ENCODE measurements at regions of chr17 and their contacts with region 1.

Region 1: GRCh38 chr17:63848834-63849700 is 6.6 kb upstream of the SMARCD2 start:
- DNase-seq: no peak
- H3K4me3 ChIP-seq: peak overlapping the region; percentile 43
- CTCF ChIP-seq: peak; percentile 78

Region 2: DNA sequence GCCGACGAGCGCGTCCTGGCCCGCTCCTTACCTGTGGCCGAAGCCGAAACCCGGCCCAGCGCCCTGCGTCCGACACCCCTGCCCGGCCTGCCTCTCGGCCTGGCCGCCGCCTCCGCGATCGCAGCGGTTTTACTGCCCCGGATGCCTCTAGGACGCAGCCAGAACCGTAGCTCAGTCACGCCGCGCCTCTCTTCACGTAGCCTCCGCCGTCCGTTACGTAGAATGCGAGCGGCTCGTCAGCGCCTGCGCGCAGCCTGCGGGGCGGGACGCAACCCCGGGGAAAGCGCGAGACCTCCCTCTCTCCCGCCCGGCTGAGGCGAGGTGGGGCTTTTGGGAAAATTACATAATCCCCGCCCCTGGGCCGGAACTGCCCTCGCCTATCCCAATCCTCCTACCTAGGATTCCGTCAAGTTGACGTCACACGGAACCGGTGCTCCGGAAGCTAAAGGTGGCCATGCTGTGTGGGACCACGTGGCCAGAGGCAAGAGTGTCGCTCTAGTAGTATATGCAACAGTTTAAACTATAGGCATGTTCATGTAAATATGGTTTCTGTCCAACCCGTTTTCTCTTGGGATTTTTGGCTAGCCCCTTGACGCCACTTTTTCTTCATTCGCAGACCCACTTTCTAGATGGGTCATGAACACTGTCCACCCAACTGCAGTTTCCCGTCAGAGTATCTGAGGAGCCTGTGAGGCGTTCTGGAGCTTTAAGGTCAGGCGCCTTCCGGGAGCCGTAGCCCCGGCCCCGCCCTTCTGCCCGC is 75.5 kb before region 1 on chr17 and contains the start of gene CCDC47:
- CTCF ChIA-PET with region 1: no interaction called
- POLR2A ChIA-PET with region 1: no interaction called
- DNase-seq: peak; percentile 93
- H3K4me3 ChIP-seq: peak within 1 kb of the TSS; percentile 92
- CTCF ChIP-seq: no peak

Region 3: DNA sequence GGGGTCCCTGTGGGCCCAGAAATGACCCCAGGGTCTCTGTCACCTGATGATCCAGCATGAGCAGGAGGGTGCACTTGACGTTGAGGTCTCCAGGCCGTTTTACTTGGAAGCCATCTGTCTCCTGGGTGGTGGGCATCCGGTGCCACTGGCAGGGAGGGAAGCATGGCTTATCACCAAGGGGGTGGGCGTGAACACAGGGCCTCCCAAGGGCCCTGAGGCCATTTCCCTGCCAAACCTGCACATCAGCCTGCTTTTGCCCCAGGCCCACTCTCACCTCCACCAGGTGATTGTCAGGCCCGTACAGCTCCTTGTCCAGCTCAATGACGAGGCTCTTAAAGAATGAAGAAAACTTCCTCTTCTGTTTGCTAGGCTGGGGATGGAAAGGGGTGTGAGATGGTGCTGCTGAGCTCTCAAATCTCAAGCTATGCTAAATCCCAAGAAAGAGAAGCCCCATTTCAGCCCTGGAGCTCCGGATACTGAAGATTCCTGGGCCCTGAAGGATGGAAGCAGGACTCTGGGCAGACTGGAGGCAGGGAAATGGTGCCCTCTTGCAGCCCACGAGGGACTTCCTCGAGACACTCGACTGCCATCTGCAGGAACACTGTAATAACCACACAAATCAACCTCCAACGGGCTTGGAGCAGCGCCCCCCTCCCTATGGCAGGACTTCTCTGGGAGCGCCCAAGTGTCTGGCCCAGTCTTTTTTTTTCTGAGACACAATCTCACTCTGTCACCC is 14.5 kb before region 1 on chr17:
- CTCF ChIA-PET with region 1: interaction called, 15 read pairs
- POLR2A ChIA-PET with region 1: no interaction called
- DNase-seq: no peak
- H3K4me3 ChIP-seq: no peak overlapping the region
- CTCF ChIP-seq: peak; percentile 76

Region 4: GRCh38 chr17:63859257-63859656 is 10.2 kb after region 1 on chr17:
- CTCF ChIA-PET with region 1: interaction called, 47 read pairs
- POLR2A ChIA-PET with region 1: no interaction called
- DNase-seq: no peak
- H3K4me3 ChIP-seq: no peak overlapping the region
- CTCF ChIP-seq: no peak

Region 5: GRCh38 chr17:64133546-64134215 is 284.6 kb after region 1 on chr17:
- CTCF ChIA-PET with region 1: no interaction called
- POLR2A ChIA-PET with region 1: no interaction called
- DNase-seq: no peak
- H3K4me3 ChIP-seq: no peak overlapping the region
- CTCF ChIP-seq: peak; percentile 36

Measured in AG04449 (cell line).